WTC11 (cell line): ENCODE measurements at regions of chr17 and their contacts with region 1.

Region 1: DNA sequence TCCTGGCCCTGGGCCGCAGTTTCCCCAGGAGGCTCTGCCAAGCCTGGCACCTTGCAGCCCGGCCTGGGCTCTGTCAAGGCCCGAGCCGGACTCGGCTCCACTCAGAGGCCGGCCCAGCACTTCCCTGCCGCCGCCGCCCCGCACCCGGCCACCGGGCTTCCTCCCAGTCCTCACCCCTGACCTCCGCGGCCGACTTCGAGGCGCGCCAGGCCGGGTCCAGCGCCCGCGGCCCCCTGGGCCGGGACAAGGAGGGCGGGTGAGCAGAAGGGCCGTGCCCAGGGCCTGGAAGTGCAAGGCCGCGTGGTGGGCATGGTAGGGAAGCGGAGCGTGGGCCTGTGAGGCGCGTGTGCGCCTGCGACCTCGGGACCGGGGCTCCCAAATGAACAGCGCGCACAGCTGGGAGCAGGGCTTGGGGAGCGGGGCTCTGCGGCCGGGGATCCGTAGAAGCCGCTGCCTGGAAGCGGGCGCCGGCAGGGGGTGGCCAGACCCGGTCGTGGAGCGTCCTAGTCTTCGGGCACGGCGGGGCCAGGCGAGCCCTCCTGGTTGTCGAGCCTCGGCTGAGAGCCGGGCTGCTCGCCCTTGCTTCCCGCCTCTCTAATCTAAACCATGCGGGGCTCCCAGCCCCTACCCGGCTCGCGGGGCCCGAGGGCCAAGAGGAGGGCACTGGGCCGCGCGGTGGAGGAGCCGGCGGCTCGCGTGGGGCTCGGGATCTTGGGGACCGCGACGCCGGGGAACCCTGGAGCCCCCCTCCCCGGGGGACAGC is 503 bp upstream of the TBX4 start:
- DNase-seq: peak; percentile 60
- ATAC-seq: peak; percentile 19
- H3K4me3 Mint-ChIP-seq: peak overlapping the region; percentile 55
- H3K27ac Mint-ChIP-seq: no peak overlapping the region
- H3K4me1 Mint-ChIP-seq: peaks cover 40% of the 10 kb centered on the region
- H3K27me3 Mint-ChIP-seq: peaks cover 98% of the 10 kb centered on the region
- CTCF ChIP-seq: no peak

Region 2: DNA sequence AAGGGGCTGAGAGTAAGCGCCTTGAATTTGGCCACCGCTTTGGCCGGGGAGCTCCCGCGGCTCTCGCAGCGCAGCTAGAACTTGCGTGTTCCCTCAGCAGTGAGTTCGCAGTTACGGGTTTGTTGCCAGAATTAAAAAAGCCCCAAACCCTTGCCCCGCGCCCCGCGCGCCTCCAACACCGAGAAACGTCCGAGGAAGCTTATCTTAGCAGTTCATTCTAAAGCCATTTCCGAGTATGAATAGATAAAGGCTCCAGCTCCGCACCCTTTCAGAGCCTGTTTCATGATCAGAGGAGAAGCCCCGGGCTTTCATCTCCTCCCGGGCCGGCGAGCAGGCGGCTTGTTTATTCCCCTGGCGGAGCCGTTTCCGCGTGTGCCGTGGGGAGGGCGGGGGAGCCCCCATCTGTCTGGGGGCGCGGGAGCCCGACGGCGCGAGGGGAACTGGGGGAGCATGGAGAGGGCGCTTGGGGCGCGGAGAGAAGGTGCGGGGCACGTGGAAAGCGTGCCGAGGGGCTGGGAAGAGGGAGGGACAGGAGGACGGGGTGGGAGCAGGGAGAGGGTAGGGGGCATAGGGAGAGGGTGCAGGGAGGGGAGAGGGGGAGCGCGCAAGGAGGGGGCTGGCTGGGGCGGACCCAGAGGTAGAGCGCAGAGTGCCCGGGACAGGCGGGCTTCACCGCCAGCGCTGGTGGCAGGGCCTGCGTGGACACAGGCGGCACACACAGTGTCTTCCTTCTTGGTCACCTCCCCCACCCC is 10.4 kb after region 1 on chr17:
- CTCF ChIA-PET with region 1: interaction called, 33 read pairs
- POLR2A ChIA-PET with region 1: no interaction called
- DNase-seq: no peak
- ATAC-seq: peak; percentile 13
- H3K4me3 Mint-ChIP-seq: peak overlapping the region; percentile 68
- H3K27ac Mint-ChIP-seq: no peak overlapping the region
- H3K4me1 Mint-ChIP-seq: peaks cover 38% of the 10 kb centered on the region
- H3K27me3 Mint-ChIP-seq: peaks cover 100% of the 10 kb centered on the region
- CTCF ChIP-seq: no peak

Region 3: DNA sequence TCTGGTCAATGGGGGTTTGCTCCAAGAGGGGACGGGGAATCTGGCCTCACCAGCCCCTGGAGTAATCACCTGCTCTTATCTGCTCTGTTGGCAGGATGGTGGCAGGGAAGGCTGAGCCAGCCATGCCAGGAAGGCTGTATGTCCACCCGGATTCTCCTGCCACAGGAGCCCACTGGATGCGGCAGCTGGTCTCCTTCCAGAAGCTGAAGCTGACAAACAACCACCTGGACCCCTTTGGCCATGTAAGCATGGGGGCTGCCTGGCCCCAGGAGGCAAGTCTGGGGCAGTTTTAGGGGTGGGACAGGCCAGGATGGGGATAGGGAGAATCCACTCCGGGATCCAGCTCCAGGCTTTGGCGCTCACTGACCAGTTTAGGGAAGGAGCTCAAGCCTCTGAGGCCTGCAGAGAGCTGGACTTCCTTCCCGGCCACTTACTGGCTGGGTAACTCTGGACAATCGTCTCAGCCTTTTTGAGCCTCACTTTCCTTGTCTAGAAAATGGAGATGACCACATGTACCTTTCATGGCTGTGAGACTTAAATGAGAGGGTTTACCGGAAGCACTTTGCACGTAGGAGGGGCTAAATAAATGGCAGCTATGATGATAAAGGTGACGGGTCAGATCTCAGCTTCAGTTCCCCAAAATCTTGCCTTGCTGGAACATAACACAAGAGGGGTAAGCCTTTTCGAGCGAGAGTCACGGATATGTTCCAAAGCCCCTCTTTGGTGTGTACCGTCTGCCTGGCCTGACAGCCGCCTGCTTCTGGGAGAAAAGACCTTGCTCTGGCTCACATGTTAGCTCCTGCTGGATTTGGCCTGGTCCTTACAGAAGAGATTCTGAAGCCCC is 15.9 kb after region 1 on chr17:
- CTCF ChIA-PET with region 1: interaction called, 33 read pairs
- POLR2A ChIA-PET with region 1: no interaction called
- DNase-seq: peak; percentile 79
- ATAC-seq: peak; percentile 70
- H3K4me3 Mint-ChIP-seq: peak overlapping the region; percentile 37; the same call in 1 of the 2 replicates
- H3K27ac Mint-ChIP-seq: no peak overlapping the region
- H3K4me1 Mint-ChIP-seq: peaks cover 19% of the 10 kb centered on the region
- H3K27me3 Mint-ChIP-seq: peaks cover 82% of the 10 kb centered on the region
- CTCF ChIP-seq: no peak